ENCODE measurements at regions of chr14 and their contacts with region 1.

Region 1: GRCh38 chr14:101774006-101774795 is 12.7 kb downstream of the PPP2R5C start:
- DNase-seq: no peak
- H3K4me3 ChIP-seq: no peak overlapping the region
- H3K27ac ChIP-seq: no peak overlapping the region
- H3K4me1 ChIP-seq: no peaks in the 10 kb centered on the region
- H3K27me3 ChIP-seq: no peaks in the 10 kb centered on the region
- CTCF ChIP-seq: no peak

Region 2: DNA sequence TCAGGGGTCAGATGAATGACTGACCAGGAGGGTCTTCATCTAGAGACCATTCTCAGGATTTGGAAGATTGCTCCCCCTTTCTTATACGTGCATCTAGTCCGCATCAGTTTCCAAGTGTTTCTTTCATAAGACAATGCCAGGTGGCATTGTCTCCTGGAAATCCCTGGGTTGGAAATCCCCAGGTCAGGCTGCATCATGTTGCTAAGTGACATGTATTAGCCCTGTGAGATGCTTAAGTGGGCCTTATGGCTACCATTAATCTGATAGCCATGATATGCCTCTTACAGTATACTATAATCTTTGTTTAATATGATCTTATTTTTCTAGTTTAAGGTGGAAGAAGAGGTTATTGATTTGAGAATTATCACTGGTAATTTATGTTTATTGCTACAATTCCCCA is 120.2 kb before region 1 on chr14:
- CTCF ChIA-PET with region 1: no interaction called
- dilution Hi-C with region 1: no loop called
- in situ Hi-C with region 1: no loop called
- intact Hi-C with region 1: no loop called
- DNase-seq: peak; percentile 20
- H3K4me3 ChIP-seq: no peak overlapping the region
- H3K27ac ChIP-seq: no peak overlapping the region
- H3K4me1 ChIP-seq: no peaks in the 10 kb centered on the region
- H3K27me3 ChIP-seq: no peaks in the 10 kb centered on the region
- CTCF ChIP-seq: no peak

Region 3: DNA sequence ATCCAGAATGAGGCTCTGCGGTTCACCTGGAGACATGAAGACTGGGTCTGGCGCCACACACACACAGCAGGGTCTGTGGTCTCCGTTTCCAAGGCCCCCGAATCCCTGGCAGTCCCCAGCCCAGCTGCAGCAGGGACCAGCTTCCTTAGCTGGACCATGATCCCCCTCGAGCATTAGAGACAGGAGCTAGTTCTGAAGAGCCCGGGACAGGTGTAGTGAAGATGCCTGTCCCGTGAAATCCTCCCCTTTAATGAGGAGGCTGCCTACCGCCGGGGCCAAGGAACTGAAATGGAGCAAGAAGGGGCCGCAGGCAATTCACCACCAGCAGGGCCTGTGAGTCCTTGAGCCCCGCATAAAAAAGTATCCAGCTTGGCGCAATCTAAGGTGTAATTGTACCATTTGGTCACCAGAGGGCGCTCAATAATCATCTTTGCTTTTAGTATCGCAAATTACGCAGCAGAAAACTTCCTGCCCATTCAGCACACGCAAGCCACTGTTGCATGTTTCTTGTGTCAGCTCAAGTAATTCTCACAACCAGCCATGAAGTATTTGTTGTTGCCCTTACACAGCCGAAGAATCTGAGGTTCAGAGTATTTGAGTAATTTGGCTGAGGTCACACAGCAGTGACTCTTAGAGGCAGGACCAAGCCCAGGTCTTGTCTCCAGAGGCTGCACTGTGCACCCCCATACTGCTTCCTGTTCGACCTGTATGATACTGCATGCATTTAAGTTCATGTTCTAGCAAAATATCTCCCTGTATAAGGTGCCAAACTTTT is 66.9 kb before region 1 on chr14:
- CTCF ChIA-PET with region 1: interaction called, 4 read pairs
- dilution Hi-C with region 1: no loop called
- in situ Hi-C with region 1: no loop called
- intact Hi-C with region 1: loop called (anchors 1 kb)
- DNase-seq: peak; percentile 58
- H3K4me3 ChIP-seq: no peak overlapping the region
- H3K27ac ChIP-seq: no peak overlapping the region
- H3K4me1 ChIP-seq: peaks cover 10% of the 10 kb centered on the region
- H3K27me3 ChIP-seq: no peaks in the 10 kb centered on the region
- CTCF ChIP-seq: peak; percentile 66 to 71

Region 4: GRCh38 chr14:101843665-101844064 is 69.5 kb after region 1 on chr14:
- CTCF ChIA-PET with region 1: no interaction called
- dilution Hi-C with region 1: no loop called
- in situ Hi-C with region 1: no loop called
- intact Hi-C with region 1: loop called (anchors 10 kb)
- DNase-seq: no peak
- H3K4me3 ChIP-seq: no peak overlapping the region
- H3K27ac ChIP-seq: no peak overlapping the region
- H3K4me1 ChIP-seq: peaks cover 8% of the 10 kb centered on the region
- H3K27me3 ChIP-seq: no peaks in the 10 kb centered on the region
- CTCF ChIP-seq: peak; percentile 18

Region 5: GRCh38 chr14:101889898-101890297 is 115.7 kb after region 1 on chr14:
- CTCF ChIA-PET with region 1: no interaction called
- dilution Hi-C with region 1: no loop called
- in situ Hi-C with region 1: no loop called
- intact Hi-C with region 1: loop called (anchors 5 kb)
- DNase-seq: no peak
- H3K4me3 ChIP-seq: no peak overlapping the region
- H3K27ac ChIP-seq: no peak overlapping the region
- H3K4me1 ChIP-seq: no peaks in the 10 kb centered on the region
- H3K27me3 ChIP-seq: no peaks in the 10 kb centered on the region
- CTCF ChIP-seq: no peak

Region 6: GRCh38 chr14:101927859-101928258 is 153.7 kb after region 1 on chr14:
- CTCF ChIA-PET with region 1: no interaction called
- dilution Hi-C with region 1: no loop called
- in situ Hi-C with region 1: no loop called
- intact Hi-C with region 1: loop called (anchors 10 kb)
- DNase-seq: peak; percentile 60
- H3K4me3 ChIP-seq: no peak overlapping the region
- H3K27ac ChIP-seq: no peak overlapping the region
- H3K4me1 ChIP-seq: no peaks in the 10 kb centered on the region
- H3K27me3 ChIP-seq: no peaks in the 10 kb centered on the region
- CTCF ChIP-seq: no peak

Region 7: DNA sequence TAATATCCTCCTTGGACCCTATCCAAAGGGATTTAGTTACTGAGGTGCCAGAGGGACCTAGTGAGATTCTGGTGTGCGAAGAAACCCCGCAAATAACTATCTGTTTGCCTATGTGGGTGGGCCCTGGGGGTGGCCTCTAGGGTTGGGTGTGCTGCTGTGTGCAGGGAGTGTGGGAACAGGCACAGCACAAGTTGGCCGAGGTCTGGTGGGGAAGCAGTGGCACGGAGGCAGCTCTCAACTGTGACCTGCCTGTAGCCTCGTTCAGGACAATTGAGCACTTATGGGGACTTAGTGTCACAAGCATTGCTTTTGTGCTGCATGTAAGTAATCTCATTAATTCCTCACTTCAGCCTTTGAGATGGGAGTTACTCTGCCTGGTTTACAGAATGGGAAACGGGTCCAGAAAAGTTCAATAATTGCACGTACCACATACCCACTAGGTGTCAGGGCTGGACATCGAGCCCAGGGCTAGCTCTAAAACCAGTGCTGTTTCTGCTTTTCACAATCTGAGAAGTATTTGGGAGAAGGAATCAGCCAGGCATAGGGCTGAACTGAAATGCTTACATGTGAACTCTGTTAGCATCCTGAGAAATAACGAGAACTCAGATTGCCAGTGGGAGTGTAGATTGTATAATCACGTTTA is 647.3 kb after region 1 on chr14:
- CTCF ChIA-PET with region 1: no interaction called
- dilution Hi-C with region 1: no loop called
- in situ Hi-C with region 1: no loop called
- intact Hi-C with region 1: no loop called
- DNase-seq: no peak
- H3K4me3 ChIP-seq: no peak overlapping the region
- H3K27ac ChIP-seq: no peak overlapping the region
- H3K4me1 ChIP-seq: no peaks in the 10 kb centered on the region
- H3K27me3 ChIP-seq: no peaks in the 10 kb centered on the region
- CTCF ChIP-seq: no peak